AG04450 (cell line): ENCODE measurements at regions of chr12 and their contacts with region 1.

Region 1: DNA sequence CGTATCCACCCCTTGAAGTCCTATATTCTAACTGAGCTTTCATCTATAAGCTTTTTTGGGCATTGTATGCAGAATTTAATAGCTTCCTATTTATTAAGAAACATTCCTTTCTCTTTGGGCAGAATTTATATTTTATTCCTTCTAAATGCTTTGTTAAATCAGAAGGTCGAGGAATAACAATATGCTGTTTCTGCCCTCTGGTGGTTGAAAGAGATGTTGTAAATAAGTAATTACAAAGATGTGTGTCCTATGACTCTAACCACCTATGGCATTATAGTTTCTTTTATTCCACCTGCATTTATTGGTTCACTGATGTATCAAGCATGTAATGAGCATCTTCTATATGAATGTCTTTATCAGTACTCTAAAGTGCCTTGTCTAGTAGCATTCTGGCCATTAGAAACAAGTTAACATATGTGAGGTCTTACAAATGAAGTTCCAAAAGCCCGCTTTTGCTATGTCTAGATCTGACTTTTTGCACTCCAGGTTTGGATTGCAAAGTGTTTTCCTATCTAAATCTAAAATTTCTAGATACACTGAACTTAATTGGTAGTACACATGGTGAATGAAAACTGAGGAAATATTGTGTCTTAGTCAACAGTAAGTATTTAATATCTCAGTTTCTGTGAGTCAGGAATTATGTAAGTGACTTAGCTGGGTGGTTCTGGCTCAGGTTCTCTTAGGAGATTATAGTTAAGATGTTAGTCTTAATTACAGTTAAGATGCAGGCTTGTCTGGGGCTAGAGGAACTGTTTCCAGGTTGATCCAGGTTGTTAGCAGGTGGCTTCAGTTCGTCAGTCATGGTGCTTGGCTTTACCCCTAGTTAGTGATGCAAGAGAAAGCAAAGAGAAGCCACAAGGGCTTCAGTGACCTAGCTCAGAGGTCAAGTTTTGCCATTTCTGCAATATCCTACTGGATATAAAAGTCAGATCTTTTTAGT is 57.5 kb downstream of the PLEKHA5 start:
- DNase-seq: no peak
- H3K4me3 ChIP-seq: no peak overlapping the region
- H3K27ac ChIP-seq: no peak overlapping the region
- H3K27me3 ChIP-seq: no peaks in the 10 kb centered on the region
- CTCF ChIP-seq: peak; percentile 59

Region 2: GRCh38 chr12:18250313-18250916 is 936.6 kb before region 1 on chr12:
- CTCF ChIA-PET with region 1: interaction called, 24 read pairs
- POLR2A ChIA-PET with region 1: no interaction called
- DNase-seq: peak; percentile 37
- H3K4me3 ChIP-seq: no peak overlapping the region
- H3K27ac ChIP-seq: no peak overlapping the region
- H3K27me3 ChIP-seq: no peaks in the 10 kb centered on the region
- CTCF ChIP-seq: peak; percentile 71

Region 3: DNA sequence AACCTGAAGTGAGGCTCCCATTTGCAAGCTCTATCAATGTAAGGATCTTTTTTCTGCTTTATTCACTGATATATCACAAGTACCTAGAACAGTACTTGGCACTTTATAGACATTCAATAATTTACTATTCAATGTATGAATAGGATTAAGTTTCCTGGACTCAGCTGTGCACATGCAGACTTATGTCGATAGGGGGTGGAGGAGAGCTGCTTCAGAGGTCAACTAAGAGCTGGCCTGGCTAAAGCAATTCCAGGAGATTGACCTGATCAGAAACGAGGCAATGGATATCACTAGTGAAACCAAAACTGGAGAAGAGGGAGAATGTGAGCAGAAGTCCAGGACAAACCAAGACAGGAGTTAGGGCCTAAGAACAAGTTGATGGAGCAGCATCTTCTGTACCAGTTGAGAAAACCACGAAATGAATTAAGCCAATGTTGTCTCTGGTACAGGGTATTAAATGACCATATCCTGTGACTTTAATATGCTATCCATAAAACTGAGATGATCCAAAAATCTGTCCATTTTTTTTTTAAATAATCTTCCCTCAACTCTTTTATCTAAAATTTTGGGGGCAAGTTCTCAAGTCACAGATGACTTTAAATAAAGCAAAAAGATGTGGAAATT is 756.5 kb before region 1 on chr12:
- CTCF ChIA-PET with region 1: interaction called, 29 read pairs
- POLR2A ChIA-PET with region 1: no interaction called
- DNase-seq: peak; percentile 32
- H3K4me3 ChIP-seq: no peak overlapping the region
- H3K27ac ChIP-seq: no peak overlapping the region
- H3K27me3 ChIP-seq: no peaks in the 10 kb centered on the region
- CTCF ChIP-seq: peak; percentile 90

Region 4: GRCh38 chr12:18861287-18861858 is 325.6 kb before region 1 on chr12:
- CTCF ChIA-PET with region 1: interaction called, 20 read pairs
- POLR2A ChIA-PET with region 1: no interaction called
- DNase-seq: no peak
- H3K4me3 ChIP-seq: no peak overlapping the region
- H3K27ac ChIP-seq: no peak overlapping the region
- H3K27me3 ChIP-seq: no peaks in the 10 kb centered on the region
- CTCF ChIP-seq: peak; percentile 47

Region 5: GRCh38 chr12:19196959-19197630 is 10.1 kb after region 1 on chr12:
- CTCF ChIA-PET with region 1: interaction called, 19 read pairs
- POLR2A ChIA-PET with region 1: no interaction called
- DNase-seq: no peak
- H3K4me3 ChIP-seq: no peak overlapping the region
- H3K27ac ChIP-seq: no peak overlapping the region
- H3K27me3 ChIP-seq: no peaks in the 10 kb centered on the region
- CTCF ChIP-seq: no peak

Region 6: DNA sequence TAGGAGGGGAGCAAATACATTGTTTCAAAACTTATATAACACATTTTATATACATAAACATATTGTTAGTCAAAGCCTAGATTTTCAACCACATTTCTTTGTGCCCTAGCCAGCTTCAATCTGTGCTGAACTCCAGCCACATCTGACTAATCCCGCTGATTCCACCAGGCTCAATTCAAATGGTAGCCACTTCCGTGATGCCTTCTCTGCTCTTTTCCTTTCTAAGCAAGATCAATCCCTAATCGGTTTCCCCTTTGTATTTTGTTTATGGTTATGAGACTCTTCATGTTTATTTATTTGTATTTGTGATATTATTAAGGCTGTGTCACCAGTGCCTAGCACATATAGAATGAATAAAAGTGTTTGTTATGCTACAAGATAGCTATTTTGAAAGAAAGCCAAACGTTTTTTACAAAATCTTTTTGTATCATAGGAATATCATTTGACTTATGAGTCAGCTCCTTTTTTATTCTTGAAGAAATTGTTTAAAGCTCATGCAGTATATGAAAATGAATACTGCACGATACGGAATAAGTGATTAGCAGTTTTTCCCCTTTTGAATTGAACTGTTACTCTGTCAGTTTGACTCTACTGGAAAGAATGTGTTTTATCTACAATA is 52.7 kb after region 1 on chr12:
- CTCF ChIA-PET with region 1: no interaction called
- POLR2A ChIA-PET with region 1: no interaction called
- DNase-seq: no peak
- H3K4me3 ChIP-seq: peak overlapping the region; percentile 20; the same call in 1 of the 2 replicates
- H3K27ac ChIP-seq: peak overlapping the region; percentile 53
- H3K27me3 ChIP-seq: no peaks in the 10 kb centered on the region
- CTCF ChIP-seq: no peak